GM10248 (cell line): ENCODE measurements at regions of chr6 and their contacts with region 1.

Region 1: GRCh38 chr6:2848851-2849250 is 7.2 kb upstream of the SERPINB1 start:
- DNase-seq: no peak
- CTCF ChIP-seq: no peak

Region 2: GRCh38 chr6:2791124-2791974 is 57.5 kb before region 1 on chr6:
- CTCF ChIA-PET with region 1: interaction called, 23 read pairs
- POLR2A ChIA-PET with region 1: interaction called, 6 read pairs
- DNase-seq: peak; percentile 73
- CTCF ChIP-seq: peak; percentile 65

Region 3: GRCh38 chr6:2862712-2863181 is 13.9 kb after region 1 on chr6:
- CTCF ChIA-PET with region 1: interaction called, 22 read pairs
- POLR2A ChIA-PET with region 1: no interaction called
- DNase-seq: peak; percentile 52
- CTCF ChIP-seq: no peak

Region 4: DNA sequence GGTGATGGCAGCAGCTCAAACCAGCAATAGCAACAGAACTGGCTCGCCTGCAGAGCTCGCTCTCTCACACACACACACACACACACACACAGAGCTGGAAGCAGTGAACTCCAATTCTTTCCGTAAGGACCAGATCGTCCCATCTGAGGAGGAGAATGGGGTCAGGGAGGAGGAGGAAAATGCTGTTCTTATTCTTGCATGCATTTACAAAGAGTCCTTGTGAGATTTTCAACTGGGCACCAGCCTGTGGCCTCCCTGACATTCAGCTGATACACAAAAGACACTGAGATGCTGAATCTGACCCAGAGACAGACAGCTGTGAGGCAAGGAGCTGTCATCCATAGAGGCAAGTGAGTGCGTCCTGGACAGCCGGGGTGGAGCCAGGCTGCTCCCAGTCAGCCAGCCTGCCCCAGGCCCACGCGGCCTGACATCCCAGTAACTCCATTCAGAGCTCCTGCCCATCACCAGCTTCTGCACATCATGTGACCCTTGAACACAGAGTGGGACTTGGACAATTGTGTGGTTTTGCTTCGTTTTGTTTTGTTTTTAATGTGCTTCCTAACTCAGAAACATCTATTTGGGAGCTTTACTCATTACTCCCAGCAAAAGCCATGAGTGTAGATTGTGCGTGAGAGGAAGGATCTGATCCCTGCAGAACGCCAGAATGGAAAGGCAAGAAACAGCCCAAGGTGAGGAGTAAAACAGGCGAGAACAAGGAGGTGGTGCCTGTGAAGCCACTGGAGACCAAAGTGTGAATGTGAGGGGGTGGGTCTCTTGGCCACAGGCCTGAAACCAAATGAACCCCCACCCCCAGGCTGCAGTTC is 52.2 kb after region 1 on chr6:
- CTCF ChIA-PET with region 1: interaction called, 37 read pairs
- POLR2A ChIA-PET with region 1: interaction called, 5 read pairs
- DNase-seq: no peak
- CTCF ChIP-seq: no peak

Region 5: DNA sequence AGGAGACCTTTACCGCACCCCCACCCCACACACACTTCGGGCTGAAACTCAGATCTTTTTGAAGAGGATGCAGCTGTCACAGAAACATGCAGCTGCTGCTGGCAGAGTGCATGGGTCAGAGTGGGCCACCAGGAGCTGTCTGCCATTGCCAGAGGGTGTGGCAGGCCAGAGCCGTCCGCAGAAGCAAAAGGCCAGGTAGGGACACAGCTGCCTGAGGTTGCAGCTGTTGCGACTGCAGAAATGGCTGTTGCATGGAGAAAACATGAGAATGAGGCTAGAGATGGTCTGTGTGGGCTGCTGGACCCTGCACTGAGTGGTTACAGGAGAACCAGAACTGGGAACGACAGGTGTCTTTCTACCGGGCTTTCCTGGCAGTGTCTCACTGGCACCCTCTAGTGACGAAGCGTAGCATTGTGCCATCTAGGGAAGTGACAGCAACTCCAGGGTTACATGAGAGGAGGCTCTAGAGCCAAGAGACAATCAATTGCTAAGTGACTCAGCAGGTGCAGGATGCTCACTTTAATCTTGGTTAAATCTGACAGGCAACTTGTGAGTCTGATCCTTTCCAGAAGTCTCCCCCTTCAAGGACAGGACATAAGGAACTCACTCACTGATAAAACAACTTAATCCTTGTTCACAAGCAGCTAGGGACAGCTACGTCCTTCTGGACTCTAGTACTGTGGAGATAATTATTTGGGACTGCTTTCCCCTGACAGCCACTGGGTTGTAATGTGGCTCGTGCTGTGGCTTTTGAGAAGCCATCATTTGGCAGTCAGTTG is 83.3 kb after region 1 on chr6:
- CTCF ChIA-PET with region 1: interaction called, 149 read pairs
- POLR2A ChIA-PET with region 1: no interaction called
- DNase-seq: peak; percentile 86
- CTCF ChIP-seq: peak; percentile 96

Region 6: GRCh38 chr6:3063733-3064700 is 215.2 kb after region 1 on chr6:
- CTCF ChIA-PET with region 1: interaction called, 5 read pairs
- POLR2A ChIA-PET with region 1: interaction called, 10 read pairs
- DNase-seq: peak; percentile 92
- CTCF ChIP-seq: no peak